ENCODE measurements at regions of chr7 and their contacts with region 1.

Region 1: GRCh38 chr7:149729983-149730801 is 43.2 kb downstream of the ZNF467 start:
- DNase-seq: no peak
- H3K4me3 ChIP-seq: no peak overlapping the region
- H3K27ac ChIP-seq: no peak overlapping the region
- H3K4me1 ChIP-seq: peaks cover 4% of the 10 kb centered on the region
- H3K27me3 ChIP-seq: no peaks in the 10 kb centered on the region
- CTCF ChIP-seq: no peak
- POLR2A ChIP-seq: no peak

Region 2: GRCh38 chr7:149427096-149427680 is 303.0 kb before region 1 on chr7:
- intact Hi-C with region 1: no loop called
- DNase-seq: no peak
- H3K4me3 ChIP-seq: no peak overlapping the region
- H3K27ac ChIP-seq: no peak overlapping the region
- H3K4me1 ChIP-seq: peaks cover 6% of the 10 kb centered on the region
- H3K27me3 ChIP-seq: no peaks in the 10 kb centered on the region
- CTCF ChIP-seq: no peak
- POLR2A ChIP-seq: no peak

Region 3: DNA sequence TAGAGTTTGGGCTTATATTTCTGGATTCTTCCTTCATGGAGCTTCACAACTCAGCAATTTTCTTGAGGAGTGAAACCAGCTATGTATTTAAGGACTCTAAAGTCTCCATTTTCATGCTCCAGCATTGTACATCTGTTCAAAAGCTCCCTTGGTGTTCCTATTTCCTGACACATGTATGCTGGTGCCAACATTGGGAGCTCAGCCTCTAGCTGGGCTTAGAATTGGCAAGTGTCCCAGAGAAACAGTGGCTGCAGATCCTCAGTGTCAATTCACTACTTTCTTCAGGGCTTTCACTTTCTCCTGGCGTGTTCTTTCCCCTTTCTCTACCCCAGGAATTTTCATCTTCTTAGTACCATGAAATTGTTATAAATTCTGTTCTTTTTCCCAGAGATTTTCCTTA is 59.9 kb before region 1 on chr7:
- intact Hi-C with region 1: loop called (anchors 10 kb)
- DNase-seq: no peak
- H3K4me3 ChIP-seq: no peak overlapping the region
- H3K27ac ChIP-seq: no peak overlapping the region
- H3K4me1 ChIP-seq: no peaks in the 10 kb centered on the region
- H3K27me3 ChIP-seq: no peaks in the 10 kb centered on the region
- CTCF ChIP-seq: no peak
- POLR2A ChIP-seq: no peak

Measured in vagina (tissue), 2 donors.